AG04450 (cell line): ENCODE measurements at regions of chr20 and their contacts with region 1.

Region 1: GRCh38 chr20:49424536-49424935 is 57.9 kb downstream of the KCNB1 start:
- DNase-seq: no peak
- H3K4me3 ChIP-seq: no peak overlapping the region
- H3K27ac ChIP-seq: no peak overlapping the region
- H3K27me3 ChIP-seq: peaks cover 39% of the 10 kb centered on the region
- CTCF ChIP-seq: no peak

Region 2: DNA sequence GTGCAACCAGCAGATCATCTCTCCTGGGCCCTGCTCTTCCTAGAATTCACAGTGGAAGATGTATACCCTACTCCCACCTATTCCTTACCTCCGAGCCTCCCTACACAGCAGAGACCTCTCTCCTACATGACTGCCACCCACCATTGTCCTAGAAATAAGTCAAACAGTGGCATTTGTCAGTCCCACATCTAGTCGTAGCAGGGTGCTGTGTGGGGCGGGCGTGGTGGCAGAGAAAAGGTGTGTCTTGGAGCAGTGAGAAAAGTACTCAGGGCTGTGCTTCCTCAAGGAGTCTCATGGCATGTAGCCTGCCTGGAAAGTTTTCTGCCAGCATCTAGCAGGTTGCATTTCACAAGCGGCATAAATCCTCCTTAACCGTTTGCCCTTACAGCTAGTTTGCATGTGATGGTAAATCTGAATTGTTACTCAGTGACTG is 202.8 kb after region 1 on chr20:
- CTCF ChIA-PET with region 1: interaction called, 11 read pairs
- POLR2A ChIA-PET with region 1: no interaction called
- DNase-seq: no peak
- H3K4me3 ChIP-seq: no peak overlapping the region
- H3K27ac ChIP-seq: no peak overlapping the region
- H3K27me3 ChIP-seq: peaks cover 2% of the 10 kb centered on the region
- CTCF ChIP-seq: no peak

Region 3: GRCh38 chr20:49948809-49949548 is 524.4 kb after region 1 on chr20:
- CTCF ChIA-PET with region 1: interaction called, 10 read pairs
- POLR2A ChIA-PET with region 1: no interaction called
- DNase-seq: peak; percentile 92
- H3K4me3 ChIP-seq: no peak overlapping the region
- H3K27ac ChIP-seq: peak overlapping the region; percentile 100
- H3K27me3 ChIP-seq: no peaks in the 10 kb centered on the region
- CTCF ChIP-seq: no peak